Ascending aorta (tissue), 2 donors: ENCODE measurements at regions of chr6 and their contacts with region 1.

Region 1: DNA sequence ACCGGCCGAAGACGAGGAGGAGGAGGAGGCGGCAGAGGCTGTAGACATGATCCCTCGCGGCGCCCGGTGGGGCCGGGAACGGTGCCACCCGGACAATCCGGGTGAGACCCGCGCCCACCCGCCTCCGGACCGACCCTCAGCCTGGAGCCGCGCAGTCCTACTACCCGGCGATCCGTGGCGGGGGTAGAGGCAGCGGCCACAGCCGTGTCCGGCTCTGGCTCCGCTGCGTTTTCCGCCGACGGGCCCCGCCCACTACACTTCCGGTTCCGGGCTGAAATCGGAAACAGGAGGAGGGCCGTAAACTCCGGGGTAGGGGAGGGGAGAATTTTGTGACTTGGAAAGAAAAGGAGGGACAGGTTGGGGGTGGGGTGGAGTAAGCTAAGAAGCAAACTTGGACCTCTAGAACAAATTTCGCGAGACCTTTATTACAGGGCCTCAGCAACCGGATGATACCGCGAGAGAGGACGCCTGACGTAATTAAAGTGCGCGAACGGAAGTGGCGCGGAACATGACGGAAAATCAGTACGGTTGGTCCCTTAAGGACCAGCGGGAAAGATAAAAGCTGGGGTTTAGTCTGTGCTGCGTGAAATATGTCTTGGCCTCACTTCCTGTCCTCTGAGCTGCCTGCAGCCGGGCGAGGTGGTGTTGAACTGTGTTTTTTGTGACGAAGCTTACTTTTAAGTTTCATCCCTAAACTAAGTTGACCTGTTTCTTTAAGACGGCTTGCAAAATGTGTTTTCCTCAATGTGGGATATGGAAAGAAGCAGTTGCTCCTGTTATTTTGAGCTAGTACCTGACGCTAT is at the start of gene MAP3K7:
- DNase-seq: peak; percentile 82 to 97
- H3K4me3 ChIP-seq: peak within 1 kb of the TSS; percentile 82 to 93
- H3K27ac ChIP-seq: peak within 1 kb of the TSS; percentile 89 to 93
- H3K4me1 ChIP-seq: peaks cover 4 to 16% of the 10 kb centered on the region in 2 donors
- H3K27me3 ChIP-seq: no peaks in the 10 kb centered on the region
- CTCF ChIP-seq: no peak
- total RNA-seq, gene MAP3K7: 18.3 TPM

Region 2: GRCh38 chr6:88963139-88964090 is 1623.6 kb before region 1 on chr6 and contains the start of gene RNGTT:
- intact Hi-C with region 1: loop called (anchors 10 kb)
- DNase-seq: peak; percentile 96 to 99
- H3K4me3 ChIP-seq: peak within 1 kb of the TSS; percentile 89 to 93
- H3K27ac ChIP-seq: peak within 1 kb of the TSS; percentile 79 to 86
- H3K4me1 ChIP-seq: peaks cover 0 to 6% of the 10 kb centered on the region in 2 donors
- H3K27me3 ChIP-seq: no peaks in the 10 kb centered on the region
- CTCF ChIP-seq: no peak
- total RNA-seq, gene RNGTT: 13.4 TPM

Region 3: DNA sequence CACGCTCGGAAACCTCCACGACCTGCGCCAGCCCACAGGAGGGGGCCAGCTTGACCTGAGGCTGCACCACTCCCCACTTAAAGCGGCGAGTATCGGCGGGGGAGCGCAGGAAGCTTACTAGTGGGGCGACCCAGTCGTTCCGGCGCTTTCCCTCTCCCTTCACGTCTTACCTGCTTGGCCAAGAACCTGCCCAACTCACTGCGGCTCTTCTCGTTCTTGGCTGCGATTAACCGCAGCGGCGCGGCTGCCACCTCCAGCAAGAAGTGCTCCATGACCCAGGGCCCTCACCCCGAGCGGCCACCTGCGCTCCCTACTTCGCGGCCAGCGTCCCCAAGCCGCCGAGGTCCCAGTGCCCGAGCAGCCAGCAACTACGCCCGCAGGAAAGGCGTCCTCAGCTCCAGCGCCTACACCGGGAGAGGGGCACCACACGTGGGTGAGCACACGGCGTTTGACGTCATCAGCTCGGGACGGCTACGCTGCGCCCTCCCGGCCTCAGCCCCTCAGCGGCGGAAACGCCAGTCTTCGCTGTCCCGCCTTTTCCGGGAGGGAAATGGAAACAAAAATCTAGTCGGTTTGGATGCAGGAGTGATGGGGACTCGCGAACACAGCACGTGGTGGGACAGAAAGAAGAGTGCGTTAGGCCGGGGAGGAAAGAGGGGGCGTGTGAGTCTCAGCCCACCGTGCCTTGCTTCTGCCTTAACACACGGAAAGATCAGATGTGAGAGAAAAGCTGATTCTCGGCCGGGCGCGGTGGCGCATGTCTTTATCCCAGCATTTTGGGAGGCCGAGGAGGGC is 767.5 kb before region 1 on chr6 and contains the start of gene MDN1:
- intact Hi-C with region 1: loop called (anchors 1 kb)
- DNase-seq: peak; percentile 67 to 93
- H3K4me3 ChIP-seq: peak within 1 kb of the TSS; percentile 80 to 88
- H3K27ac ChIP-seq: peak within 1 kb of the TSS; percentile 82 to 84
- H3K4me1 ChIP-seq: peaks cover 3 to 12% of the 10 kb centered on the region in 2 donors
- H3K27me3 ChIP-seq: no peaks in the 10 kb centered on the region
- CTCF ChIP-seq: peak in 1 of 3 experiments; percentile 6
- total RNA-seq, gene MDN1: 12.2 TPM

Region 4: DNA sequence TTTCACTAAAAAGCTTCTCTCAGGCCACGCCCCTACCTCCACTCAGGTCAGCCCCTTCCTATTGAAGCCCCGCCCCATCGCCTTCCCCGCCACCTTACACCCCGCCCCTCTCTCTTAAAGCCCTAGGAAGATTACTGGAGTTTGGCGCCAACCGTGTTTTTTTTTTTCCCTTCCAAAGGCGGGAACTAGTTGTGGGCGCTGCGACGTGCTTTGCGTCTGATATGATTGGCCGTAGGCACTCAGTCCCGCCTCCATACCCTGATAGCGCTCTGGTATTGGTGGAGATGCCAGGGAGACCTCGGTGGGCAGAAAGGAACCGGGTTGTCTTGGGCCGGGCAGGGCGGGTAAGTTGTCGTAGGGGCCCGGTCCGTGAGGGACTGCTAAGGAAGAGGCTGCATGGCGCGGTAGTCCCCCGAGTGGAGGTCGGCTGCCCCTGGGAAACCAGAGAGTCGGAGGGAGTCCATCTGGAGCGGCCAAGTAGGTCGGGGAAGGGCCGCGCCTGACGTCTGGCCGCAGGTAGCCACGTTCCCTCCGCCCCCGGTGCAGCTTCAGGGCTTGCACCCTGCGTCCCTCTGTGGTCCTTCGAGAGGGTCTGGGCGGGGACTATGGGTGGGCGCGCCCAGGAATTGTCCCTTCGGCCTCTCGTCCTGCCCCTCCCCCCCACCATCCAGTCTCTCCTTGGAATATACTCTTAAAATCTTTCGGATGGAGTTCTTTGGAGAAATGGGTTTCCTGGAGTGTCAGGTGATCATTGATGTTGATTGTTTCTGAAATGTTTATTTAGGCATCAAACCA is 757.2 kb before region 1 on chr6 and contains the start of gene CASP8AP2:
- intact Hi-C with region 1: loop called (anchors 1 kb)
- DNase-seq: peak; percentile 90 to 98
- H3K4me3 ChIP-seq: peak within 1 kb of the TSS; percentile 71 to 73
- H3K27ac ChIP-seq: peak within 1 kb of the TSS; percentile 85 to 89
- H3K4me1 ChIP-seq: peaks cover 0 to 11% of the 10 kb centered on the region in 2 donors
- H3K27me3 ChIP-seq: no peaks in the 10 kb centered on the region
- CTCF ChIP-seq: no peak
- total RNA-seq, gene CASP8AP2: 6.7 TPM

Region 5: DNA sequence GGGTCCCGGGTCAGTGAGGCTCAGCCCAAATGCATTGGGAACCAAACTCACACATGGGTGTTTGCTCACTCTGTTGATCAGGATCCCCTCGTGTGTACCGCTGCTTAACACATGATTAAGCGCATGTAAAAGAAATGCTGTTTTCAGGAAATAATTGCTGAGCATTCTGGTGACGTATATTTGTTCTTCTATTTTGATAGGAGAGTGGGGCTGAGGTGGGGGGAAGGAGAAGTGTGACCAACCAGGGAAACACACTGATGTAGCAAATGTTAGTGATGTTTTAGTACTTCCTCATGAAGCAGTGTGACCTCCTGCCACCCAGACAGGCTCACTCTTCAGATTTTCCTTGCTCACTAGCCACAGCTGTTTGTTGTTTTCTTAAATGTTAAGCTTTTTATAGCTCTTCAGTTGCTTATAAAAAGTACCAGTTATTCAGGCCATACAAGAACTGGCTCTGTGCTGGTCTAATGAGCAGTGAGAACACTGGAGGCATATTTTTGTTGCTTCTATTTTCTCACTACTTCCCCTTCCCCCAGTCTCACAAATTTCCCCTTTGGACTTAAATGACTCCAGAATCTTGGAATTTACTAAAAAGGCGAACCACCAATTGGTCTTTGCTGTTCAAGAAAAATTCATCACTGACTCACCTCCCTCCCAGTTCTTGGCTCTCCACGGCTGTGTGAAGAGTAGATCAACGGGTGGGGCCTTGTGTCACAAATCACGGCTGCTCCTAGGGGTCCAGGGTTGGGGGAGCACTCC is 211.2 kb before region 1 on chr6:
- intact Hi-C with region 1: loop called (anchors 5 kb)
- DNase-seq: peak; percentile 18 to 82
- H3K4me3 ChIP-seq: no peak overlapping the region
- H3K27ac ChIP-seq: peak overlapping the region; percentile 66 to 77
- H3K4me1 ChIP-seq: peaks cover 4 to 14% of the 10 kb centered on the region in 2 donors
- H3K27me3 ChIP-seq: no peaks in the 10 kb centered on the region
- CTCF ChIP-seq: no peak

Region 6: GRCh38 chr6:90523779-90524310 is 63.2 kb before region 1 on chr6:
- intact Hi-C with region 1: no loop called
- DNase-seq: no peak
- H3K4me3 ChIP-seq: no peak overlapping the region
- H3K27ac ChIP-seq: no peak overlapping the region
- H3K4me1 ChIP-seq: no peaks in the 10 kb centered on the region
- H3K27me3 ChIP-seq: no peaks in the 10 kb centered on the region
- CTCF ChIP-seq: no peak